SK-N-SH (cell line): ENCODE measurements at regions of chr6 and their contacts with region 1.

Region 1: DNA sequence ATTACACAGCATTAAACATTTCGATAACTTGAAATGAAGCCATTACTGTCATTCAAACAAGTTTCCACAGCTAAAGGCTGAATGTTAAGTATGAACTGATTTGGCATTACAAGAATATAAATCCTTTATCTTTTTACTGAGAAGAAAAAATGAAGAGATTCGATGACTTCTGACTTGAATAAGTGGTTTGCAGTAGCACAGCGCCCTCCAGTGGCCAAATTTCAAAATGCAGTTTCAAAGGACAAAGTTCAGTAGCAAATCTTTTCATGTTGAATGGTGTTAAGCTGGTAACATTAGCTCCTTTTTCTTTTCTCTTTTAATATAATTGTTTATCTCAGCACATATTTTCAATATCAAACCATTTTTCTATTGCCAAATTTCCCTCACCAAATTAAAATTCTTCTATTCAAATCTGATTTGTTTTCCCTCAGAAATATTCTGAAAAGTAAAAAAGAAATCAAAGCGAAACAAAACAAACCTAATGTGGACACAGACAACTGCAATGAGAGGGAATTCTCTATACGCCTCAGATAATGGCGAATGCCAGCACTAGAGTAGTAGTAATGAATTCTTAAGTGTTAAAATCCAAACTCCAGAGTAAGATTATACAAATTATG is 145.7 kb downstream of the BTBD9 start:
- DNase-seq: peak; percentile 15
- H3K4me3 ChIP-seq: no peak overlapping the region; a peak in 1 of 4 replicates
- H3K27ac ChIP-seq: peak overlapping the region in 1 of 2 experiments; percentile 84; a peak in 2 of 4 replicates
- H3K4me1 ChIP-seq: peaks cover 0 to 15% of the 10 kb centered on the region in 2 experiments; a peak in 3 of 4 replicates
- H3K27me3 ChIP-seq: no peaks in the 10 kb centered on the region
- CTCF ChIP-seq: peak; percentile 93
- EP300 ChIP-seq: no peak
- RAD21 ChIP-seq: peak; percentile 98

Region 2: DNA sequence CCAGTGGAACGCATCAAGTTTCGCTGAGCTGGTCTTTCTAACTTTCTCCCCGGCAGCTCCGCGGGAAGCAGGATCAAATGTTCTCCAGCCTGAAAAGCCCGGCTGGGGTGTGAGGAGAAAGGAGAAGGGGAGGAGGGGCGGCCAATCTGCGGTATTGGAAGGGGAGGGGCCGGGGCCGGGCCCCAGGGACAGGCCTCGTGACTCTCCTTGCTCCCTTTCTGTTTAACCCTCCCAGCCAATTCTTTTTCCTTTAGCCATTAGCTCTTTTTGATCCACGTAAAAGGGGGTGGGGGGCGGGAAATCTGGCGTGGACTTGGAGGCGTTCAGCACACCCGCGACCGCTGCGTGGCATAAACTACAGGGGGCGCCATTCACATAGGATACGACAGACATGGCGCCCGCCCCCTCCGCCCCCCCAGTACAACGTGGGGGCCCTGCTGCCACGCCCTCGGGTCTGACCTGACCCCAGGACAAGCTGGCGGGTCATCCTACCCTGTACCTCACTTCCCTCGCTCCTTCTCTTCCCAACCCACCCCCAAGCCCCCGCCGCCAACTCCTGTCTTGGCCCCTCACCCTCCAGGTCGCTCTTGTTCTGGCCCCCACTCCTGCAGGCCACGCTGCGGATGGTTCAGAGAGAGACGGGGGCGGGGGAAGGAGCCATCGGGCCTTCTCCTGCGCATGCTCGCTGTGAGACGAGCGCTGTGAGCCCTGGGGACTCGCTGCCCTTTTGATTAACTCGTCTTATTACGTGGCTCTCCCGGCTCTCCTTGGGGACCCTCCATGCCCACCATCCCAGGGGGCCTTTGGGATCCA is 788.6 kb before region 1 on chr6:
- CTCF ChIA-PET with region 1: interaction called, 10 read pairs
- POLR2A ChIA-PET with region 1: no interaction called
- DNase-seq: peak; percentile 86
- H3K4me3 ChIP-seq: peak overlapping the region in 1 of 2 experiments; percentile 26; a peak in 2 of 4 replicates
- H3K27ac ChIP-seq: peak overlapping the region in 1 of 2 experiments; percentile 74; a peak in 2 of 4 replicates
- H3K4me1 ChIP-seq: peaks cover 0 to 9% of the 10 kb centered on the region in 2 experiments; a peak in 1 of 4 replicates
- H3K27me3 ChIP-seq: no peaks in the 10 kb centered on the region
- CTCF ChIP-seq: peak; percentile 51
- EP300 ChIP-seq: no peak
- RAD21 ChIP-seq: peak; percentile 54

Region 3: DNA sequence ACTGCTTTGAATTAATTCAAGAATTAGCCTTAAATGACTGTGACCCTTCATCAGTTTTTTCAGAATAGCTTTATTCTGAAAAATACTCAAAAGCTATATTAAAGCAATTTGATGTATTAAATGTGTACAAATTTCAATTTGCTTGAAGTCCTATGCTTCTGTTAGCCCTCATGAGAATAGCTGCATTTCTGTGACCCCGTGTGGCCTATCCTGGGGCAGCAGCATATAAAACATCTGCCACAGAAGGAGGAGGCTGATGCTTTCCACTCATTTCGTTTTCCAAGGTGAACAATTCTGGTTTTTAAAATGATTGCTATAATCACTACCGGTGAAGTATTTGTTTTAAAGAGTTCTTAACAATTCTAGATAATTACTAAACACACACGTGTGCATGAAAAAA is 214.6 kb before region 1 on chr6:
- CTCF ChIA-PET with region 1: interaction called, 10 read pairs
- POLR2A ChIA-PET with region 1: no interaction called
- DNase-seq: peak; percentile 49
- H3K4me3 ChIP-seq: no peak overlapping the region
- H3K27ac ChIP-seq: peak overlapping the region in 1 of 2 experiments; percentile 80; a peak in 2 of 4 replicates
- H3K4me1 ChIP-seq: peaks cover 6 to 17% of the 10 kb centered on the region in 2 experiments; a peak in 3 of 4 replicates
- H3K27me3 ChIP-seq: no peaks in the 10 kb centered on the region
- CTCF ChIP-seq: peak; percentile 50
- EP300 ChIP-seq: no peak
- RAD21 ChIP-seq: peak; percentile 85

Region 4: GRCh38 chr6:38477680-38478260 is 16.3 kb before region 1 on chr6:
- CTCF ChIA-PET with region 1: interaction called, 39 read pairs
- POLR2A ChIA-PET with region 1: no interaction called
- DNase-seq: no peak
- H3K4me3 ChIP-seq: no peak overlapping the region
- H3K27ac ChIP-seq: no peak overlapping the region
- H3K4me1 ChIP-seq: peaks cover 6 to 15% of the 10 kb centered on the region in 2 experiments; a peak in 2 of 4 replicates
- H3K27me3 ChIP-seq: no peaks in the 10 kb centered on the region
- CTCF ChIP-seq: no peak
- EP300 ChIP-seq: no peak
- RAD21 ChIP-seq: no peak

Region 5: DNA sequence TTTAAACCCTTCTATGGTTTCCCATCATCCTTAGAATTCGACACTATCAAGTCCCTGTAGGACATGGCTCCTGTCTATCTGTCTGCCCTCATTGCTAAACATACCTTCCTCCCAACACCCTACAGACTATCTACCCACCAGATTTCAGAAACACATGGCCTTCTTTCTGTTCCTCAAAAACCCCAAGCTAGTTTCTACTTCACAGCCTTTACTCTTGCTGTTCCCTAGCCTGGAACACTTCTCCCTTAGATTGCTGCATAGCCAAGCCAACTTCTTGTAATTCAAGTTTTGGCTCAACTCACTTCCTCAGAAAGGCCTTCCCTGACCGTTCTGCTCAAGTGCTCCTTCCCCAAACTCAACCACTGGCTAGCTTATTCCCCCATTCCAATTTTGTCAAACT is 10.5 kb before region 1 on chr6:
- CTCF ChIA-PET with region 1: interaction called, 39 read pairs
- POLR2A ChIA-PET with region 1: no interaction called
- DNase-seq: no peak
- H3K4me3 ChIP-seq: no peak overlapping the region
- H3K27ac ChIP-seq: peak overlapping the region in 1 of 2 experiments; percentile 95; a peak in 1 of 4 replicates
- H3K4me1 ChIP-seq: peaks cover 6 to 18% of the 10 kb centered on the region in 2 experiments; a peak in 2 of 4 replicates
- H3K27me3 ChIP-seq: no peaks in the 10 kb centered on the region
- CTCF ChIP-seq: no peak
- EP300 ChIP-seq: no peak
- RAD21 ChIP-seq: no peak

Region 6: GRCh38 chr6:38517005-38517404 is 23.0 kb after region 1 on chr6:
- CTCF ChIA-PET with region 1: interaction called, 25 read pairs
- POLR2A ChIA-PET with region 1: no interaction called
- DNase-seq: no peak
- H3K4me3 ChIP-seq: no peak overlapping the region
- H3K27ac ChIP-seq: peak overlapping the region; percentile 36 to 95
- H3K4me1 ChIP-seq: peaks cover 8 to 19% of the 10 kb centered on the region in 2 experiments; a peak in 3 of 4 replicates
- H3K27me3 ChIP-seq: no peaks in the 10 kb centered on the region
- CTCF ChIP-seq: no peak
- EP300 ChIP-seq: no peak
- RAD21 ChIP-seq: no peak

Region 7: DNA sequence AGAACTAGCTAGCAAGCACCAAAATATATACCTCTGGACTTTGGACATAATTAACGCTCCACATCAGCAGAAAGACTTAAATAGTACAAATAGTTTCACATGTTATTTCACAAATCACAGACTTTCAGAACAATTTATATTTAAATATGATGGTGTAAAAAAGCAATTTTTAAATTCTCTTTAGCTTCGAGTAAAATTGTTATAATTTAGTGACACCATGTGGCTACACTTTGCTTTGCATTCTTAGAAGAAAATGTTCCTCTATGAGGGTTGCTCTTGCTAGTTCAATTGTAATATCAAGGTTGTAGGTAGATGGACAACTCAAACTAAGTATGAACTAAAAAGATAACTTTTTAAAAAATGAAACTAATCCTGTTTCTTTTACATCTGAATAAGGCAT is 76.7 kb after region 1 on chr6:
- CTCF ChIA-PET with region 1: interaction called, 35 read pairs
- POLR2A ChIA-PET with region 1: no interaction called
- DNase-seq: no peak
- H3K4me3 ChIP-seq: no peak overlapping the region
- H3K27ac ChIP-seq: no peak overlapping the region; a peak in 1 of 4 replicates
- H3K4me1 ChIP-seq: peaks cover 7 to 17% of the 10 kb centered on the region in 2 experiments; a peak in 3 of 4 replicates
- H3K27me3 ChIP-seq: no peaks in the 10 kb centered on the region
- CTCF ChIP-seq: peak; percentile 73
- EP300 ChIP-seq: no peak
- RAD21 ChIP-seq: peak; percentile 76